ENCODE measurements at regions of chr5 and their contacts with region 1.

Region 1: GRCh38 chr5:135944967-135945560 is 9.7 kb downstream of the LECT2 start:
- DNase-seq: peak in 4 of 5 donors; percentile 33 to 44 (median 40)
- H3K4me3 ChIP-seq: no peak overlapping the region
- H3K4me3 Mint-ChIP-seq: no peak overlapping the region
- H3K27ac ChIP-seq: no peak overlapping the region
- H3K27ac Mint-ChIP-seq: no peak overlapping the region
- H3K4me1 ChIP-seq: no peaks in the 10 kb centered on the region
- H3K4me1 Mint-ChIP-seq: no peaks in the 10 kb centered on the region
- H3K27me3 ChIP-seq: no peaks in the 10 kb centered on the region
- H3K27me3 Mint-ChIP-seq: peaks cover 4 to 8% of the 10 kb centered on the region in 2 donors

Region 2: DNA sequence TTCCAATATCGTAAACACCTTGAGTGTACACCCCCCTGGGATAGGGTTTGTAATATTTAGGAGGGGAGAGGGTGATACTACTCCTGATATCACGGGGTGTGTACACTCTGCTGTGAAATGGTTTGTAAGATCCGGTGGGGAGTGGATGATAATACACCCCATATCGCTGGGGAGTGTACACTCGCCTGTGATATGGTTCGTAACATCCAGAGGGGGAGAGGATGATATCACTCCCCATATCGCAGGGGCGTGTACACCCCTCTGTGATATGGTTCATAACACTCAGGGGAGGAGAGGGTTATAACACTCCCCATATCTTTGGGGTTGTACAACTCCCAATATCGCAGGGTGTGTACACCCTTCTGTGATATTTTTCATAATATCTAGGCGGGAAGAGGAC is 144.4 kb before region 1 on chr5:
- CTCF ChIA-PET with region 1: no interaction called
- POLR2A ChIA-PET with region 1: no interaction called
- intact Hi-C with region 1: no loop called
- DNase-seq: no peak
- H3K4me3 ChIP-seq: no peak overlapping the region
- H3K4me3 Mint-ChIP-seq: no peak overlapping the region
- H3K27ac ChIP-seq: no peak overlapping the region
- H3K27ac Mint-ChIP-seq: no peak overlapping the region
- H3K4me1 ChIP-seq: no peaks in the 10 kb centered on the region
- H3K4me1 Mint-ChIP-seq: no peaks in the 10 kb centered on the region
- H3K27me3 ChIP-seq: no peaks in the 10 kb centered on the region
- H3K27me3 Mint-ChIP-seq: peaks cover 2 to 16% of the 10 kb centered on the region in 2 donors

Region 3: GRCh38 chr5:135813758-135814157 is 131.3 kb before region 1 on chr5:
- CTCF ChIA-PET with region 1: no interaction called
- POLR2A ChIA-PET with region 1: no interaction called
- intact Hi-C with region 1: no loop called
- DNase-seq: no peak
- H3K4me3 ChIP-seq: no peak overlapping the region
- H3K4me3 Mint-ChIP-seq: no peak overlapping the region
- H3K27ac ChIP-seq: no peak overlapping the region
- H3K27ac Mint-ChIP-seq: no peak overlapping the region
- H3K4me1 ChIP-seq: no peaks in the 10 kb centered on the region
- H3K4me1 Mint-ChIP-seq: no peaks in the 10 kb centered on the region
- H3K27me3 ChIP-seq: no peaks in the 10 kb centered on the region
- H3K27me3 Mint-ChIP-seq: peaks cover 12 to 29% of the 10 kb centered on the region in 2 donors

Region 4: DNA sequence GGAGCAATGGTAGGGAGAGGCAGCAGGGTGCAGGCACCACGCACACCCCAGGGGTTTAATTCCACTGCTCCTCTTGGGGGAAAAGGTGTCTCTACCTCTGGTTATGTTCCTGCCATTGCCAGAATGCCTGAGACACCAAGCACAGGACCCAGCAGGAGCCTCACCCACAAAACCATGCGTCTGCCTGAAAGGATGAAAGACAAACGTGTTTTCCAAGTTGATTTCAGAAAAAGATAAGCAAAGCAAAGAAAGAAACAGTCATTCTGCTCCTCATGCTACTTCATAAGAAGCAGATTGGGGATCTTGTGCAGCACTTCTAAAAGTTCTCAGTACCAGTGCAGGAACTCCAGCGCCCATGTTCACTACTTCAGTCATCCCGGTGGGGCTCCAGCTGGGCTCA is 35.4 kb before region 1 on chr5:
- CTCF ChIA-PET with region 1: no interaction called
- POLR2A ChIA-PET with region 1: no interaction called
- intact Hi-C with region 1: no loop called
- DNase-seq: no peak
- H3K4me3 ChIP-seq: no peak overlapping the region
- H3K4me3 Mint-ChIP-seq: no peak overlapping the region
- H3K27ac ChIP-seq: no peak overlapping the region
- H3K27ac Mint-ChIP-seq: no peak overlapping the region
- H3K4me1 ChIP-seq: peaks cover 15% of the 10 kb centered on the region
- H3K4me1 Mint-ChIP-seq: peaks cover 6 to 14% (median 10%) of the 10 kb centered on the region in 4 donors
- H3K27me3 ChIP-seq: peaks cover 10% of the 10 kb centered on the region
- H3K27me3 Mint-ChIP-seq: peaks cover 16 to 30% of the 10 kb centered on the region in 2 donors

Region 5: GRCh38 chr5:136062366-136063274 is 117.6 kb after region 1 on chr5:
- CTCF ChIA-PET with region 1: interaction called, 15 read pairs
- POLR2A ChIA-PET with region 1: no interaction called
- intact Hi-C with region 1: loop called (anchors 1 kb)
- DNase-seq: peak in 4 of 5 donors; percentile 32 to 44 (median 38)
- H3K4me3 ChIP-seq: no peak overlapping the region
- H3K4me3 Mint-ChIP-seq: no peak overlapping the region
- H3K27ac ChIP-seq: no peak overlapping the region
- H3K27ac Mint-ChIP-seq: no peak overlapping the region
- H3K4me1 ChIP-seq: no peaks in the 10 kb centered on the region
- H3K4me1 Mint-ChIP-seq: peaks cover 0 to 4% (median under 1%) of the 10 kb centered on the region in 4 donors
- H3K27me3 ChIP-seq: no peaks in the 10 kb centered on the region
- H3K27me3 Mint-ChIP-seq: no peaks in the 10 kb centered on the region

Region 6: GRCh38 chr5:136174021-136174659 is 229.1 kb after region 1 on chr5:
- CTCF ChIA-PET with region 1: interaction called, 4 read pairs
- POLR2A ChIA-PET with region 1: no interaction called
- intact Hi-C with region 1: loop called (anchors 1 kb)
- DNase-seq: peak in 2 of 5 donors; percentile 9 to 18
- H3K4me3 ChIP-seq: no peak overlapping the region
- H3K4me3 Mint-ChIP-seq: no peak overlapping the region
- H3K27ac ChIP-seq: no peak overlapping the region
- H3K27ac Mint-ChIP-seq: no peak overlapping the region
- H3K4me1 ChIP-seq: no peaks in the 10 kb centered on the region
- H3K4me1 Mint-ChIP-seq: no peaks in the 10 kb centered on the region
- H3K27me3 ChIP-seq: no peaks in the 10 kb centered on the region
- H3K27me3 Mint-ChIP-seq: no peaks in the 10 kb centered on the region

Region 7: DNA sequence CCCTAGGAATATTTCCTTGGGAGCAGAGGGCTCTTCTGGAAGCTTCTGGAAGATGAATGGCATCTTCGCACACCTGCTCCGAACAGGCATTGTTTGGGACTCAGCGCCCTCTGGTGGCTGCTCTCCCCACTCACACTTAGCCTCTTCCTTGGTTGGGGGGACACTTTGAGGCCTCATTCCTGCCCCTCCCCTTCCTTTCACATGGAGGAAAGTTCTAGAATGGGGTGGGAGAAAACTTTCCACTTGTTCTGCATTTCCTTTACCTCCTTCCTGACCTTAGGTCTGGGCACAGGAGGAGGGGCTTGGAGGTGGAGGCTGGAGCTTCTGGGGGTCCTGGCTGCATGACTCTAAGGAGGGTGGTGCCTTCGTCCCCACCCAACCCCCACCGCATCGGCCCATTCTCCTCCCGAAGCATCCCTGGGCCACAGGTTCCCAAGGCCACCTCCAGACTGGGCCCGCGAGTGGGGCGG is 267.2 kb after region 1 on chr5:
- CTCF ChIA-PET with region 1: interaction called, 7 read pairs
- POLR2A ChIA-PET with region 1: no interaction called
- intact Hi-C with region 1: loop called (anchors 1 kb)
- DNase-seq: peak in 4 of 5 donors; percentile 20 to 52 (median 30)
- H3K4me3 ChIP-seq: no peak overlapping the region
- H3K4me3 Mint-ChIP-seq: no peak overlapping the region
- H3K27ac ChIP-seq: no peak overlapping the region
- H3K27ac Mint-ChIP-seq: no peak overlapping the region
- H3K4me1 ChIP-seq: no peaks in the 10 kb centered on the region
- H3K4me1 Mint-ChIP-seq: no peaks in the 10 kb centered on the region
- H3K27me3 ChIP-seq: no peaks in the 10 kb centered on the region
- H3K27me3 Mint-ChIP-seq: peaks cover 8 to 24% of the 10 kb centered on the region in 2 donors

Region 8: GRCh38 chr5:136686192-136686872 is 741.3 kb after region 1 on chr5:
- CTCF ChIA-PET with region 1: no interaction called
- POLR2A ChIA-PET with region 1: no interaction called
- intact Hi-C with region 1: no loop called
- DNase-seq: peak in 1 of 5 donors; percentile 4
- H3K4me3 ChIP-seq: no peak overlapping the region
- H3K4me3 Mint-ChIP-seq: no peak overlapping the region
- H3K27ac ChIP-seq: no peak overlapping the region
- H3K27ac Mint-ChIP-seq: no peak overlapping the region
- H3K4me1 ChIP-seq: no peaks in the 10 kb centered on the region
- H3K4me1 Mint-ChIP-seq: peaks cover 0 to 2% (median 0%) of the 10 kb centered on the region in 4 donors
- H3K27me3 ChIP-seq: no peaks in the 10 kb centered on the region
- H3K27me3 Mint-ChIP-seq: no peaks in the 10 kb centered on the region

Measured in CD4-positive, alpha-beta memory T cell (primary cell).